Activated CD4-positive, alpha-beta T cell treated with anti-CD3 and anti-CD28 coated beads for 36 hours (primary cell): ENCODE measurements at regions of chr11 and their contacts with region 1.

Region 1: DNA sequence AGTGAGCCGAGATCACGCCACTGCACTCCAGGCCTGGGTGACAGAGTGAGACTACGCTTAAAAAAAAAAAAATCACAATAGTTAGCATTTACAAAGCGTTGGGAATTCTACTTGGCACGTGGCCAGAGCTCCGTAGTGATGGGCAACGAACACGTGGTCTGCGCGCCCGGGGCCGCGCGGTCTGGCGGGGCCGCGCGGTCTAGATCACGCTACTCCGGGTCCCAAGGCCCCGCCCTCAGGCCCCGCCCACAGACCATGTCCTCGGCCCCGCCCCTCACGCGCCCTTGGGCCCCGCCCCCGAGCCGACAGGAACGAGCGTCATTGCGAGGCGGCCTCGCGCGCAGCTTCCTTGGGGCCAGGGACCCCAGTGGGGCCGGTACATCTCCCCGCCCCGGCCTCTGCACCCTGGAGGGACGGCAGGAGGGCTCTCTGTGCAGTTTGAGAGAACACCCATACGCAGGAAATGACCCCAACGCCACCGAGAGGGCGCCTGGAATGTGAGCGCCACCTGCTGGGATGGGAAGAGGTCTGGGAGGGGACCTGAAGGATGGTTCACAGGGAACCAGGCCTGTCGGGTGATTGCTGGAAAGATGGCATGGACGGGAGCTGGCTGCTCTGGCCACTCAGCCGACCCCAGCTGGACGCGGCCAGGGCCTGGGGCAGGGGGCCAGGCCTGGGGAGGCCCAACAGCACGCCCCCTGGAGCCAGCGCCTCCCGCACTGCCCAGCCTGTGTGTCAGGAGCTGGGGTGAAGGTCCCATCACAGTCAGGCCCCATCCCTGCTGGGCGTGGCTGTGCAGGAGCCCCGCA is 2.0 kb upstream of the PTDSS2 start:
- DNase-seq: peak; percentile 99
- ATAC-seq: peak; percentile 79
- H3K4me3 Mint-ChIP-seq: peak overlapping the region; percentile 86
- H3K27ac Mint-ChIP-seq: peak overlapping the region; percentile 93
- H3K4me1 Mint-ChIP-seq: peaks cover 16% of the 10 kb centered on the region
- H3K27me3 Mint-ChIP-seq: peaks cover 3% of the 10 kb centered on the region

Region 2: DNA sequence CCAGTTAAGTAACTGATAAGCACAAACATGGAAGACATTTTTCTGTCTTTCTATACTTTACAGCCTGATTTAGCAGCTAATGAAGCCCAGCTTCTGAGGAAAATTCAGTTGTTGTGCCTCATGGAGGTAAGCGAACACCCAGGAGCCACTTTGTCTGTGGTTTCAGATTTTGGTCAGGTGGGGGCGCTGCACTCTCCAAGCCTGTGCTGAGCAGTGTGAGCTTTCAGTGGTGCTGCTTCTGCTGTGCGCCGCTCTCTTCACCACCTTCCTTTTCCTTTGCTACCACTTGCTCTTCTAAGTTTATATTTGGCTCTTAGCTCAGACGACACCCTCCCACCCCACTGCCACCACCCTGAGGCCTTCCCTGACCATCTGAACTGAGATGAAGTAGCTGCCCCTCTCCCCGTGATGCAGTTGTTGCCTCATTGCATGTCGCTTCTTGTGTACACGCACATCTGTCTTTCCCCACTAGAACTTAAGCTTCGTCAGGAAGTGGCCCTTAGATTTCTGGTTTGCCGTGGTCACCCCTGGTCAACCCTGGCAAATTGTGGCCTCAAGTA is 197.3 kb before region 1 on chr11:
- CTCF ChIA-PET with region 1: interaction called, 10 read pairs
- POLR2A ChIA-PET with region 1: no interaction called
- intact Hi-C with region 1: no loop called
- DNase-seq: peak; percentile 90
- ATAC-seq: peak; percentile 97
- H3K4me3 Mint-ChIP-seq: no peak overlapping the region
- H3K27ac Mint-ChIP-seq: peak overlapping the region; percentile 56
- H3K4me1 Mint-ChIP-seq: peaks cover 13% of the 10 kb centered on the region
- H3K27me3 Mint-ChIP-seq: no peaks in the 10 kb centered on the region

Region 3: DNA sequence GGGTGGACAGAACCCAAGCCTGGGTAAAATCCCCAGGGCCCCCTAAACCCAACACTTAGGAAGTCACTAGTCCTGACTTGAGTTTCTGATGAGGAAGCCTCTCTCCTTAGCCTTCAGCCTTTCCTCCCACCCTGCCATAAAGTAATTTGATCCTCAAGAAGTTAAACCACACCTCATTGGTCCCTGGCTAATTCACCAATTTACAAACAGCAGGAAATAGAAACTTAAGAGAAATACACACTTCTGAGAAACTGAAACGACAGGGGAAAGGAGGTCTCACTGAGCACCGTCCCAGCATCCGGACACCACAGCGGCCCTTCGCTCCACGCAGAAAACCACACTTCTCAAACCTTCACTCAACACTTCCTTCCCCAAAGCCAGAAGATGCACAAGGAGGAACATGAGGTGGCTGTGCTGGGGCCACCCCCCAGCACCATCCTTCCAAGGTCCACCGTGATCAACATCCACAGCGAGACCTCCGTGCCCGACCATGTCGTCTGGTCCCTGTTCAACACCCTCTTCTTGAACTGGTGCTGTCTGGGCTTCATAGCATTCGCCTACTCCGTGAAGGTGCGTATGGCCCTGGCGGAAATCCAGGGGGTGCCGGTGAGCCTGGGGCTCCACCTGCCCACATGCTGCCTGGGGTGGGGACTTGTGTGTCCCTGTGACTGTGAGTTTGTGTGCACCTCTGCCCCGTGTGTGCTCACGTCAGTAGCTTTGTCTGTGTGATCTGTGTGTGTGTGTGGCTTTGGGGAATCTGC is 134.2 kb before region 1 on chr11 and contains the start of gene IFITM1:
- CTCF ChIA-PET with region 1: interaction called, 9 read pairs
- POLR2A ChIA-PET with region 1: no interaction called
- intact Hi-C with region 1: loop called (anchors 2 to 5 kb)
- DNase-seq: peak; percentile 78
- ATAC-seq: peak; percentile 40
- H3K4me3 Mint-ChIP-seq: peak within 1 kb of the TSS; percentile 95
- H3K27ac Mint-ChIP-seq: peak within 1 kb of the TSS; percentile 99
- H3K4me1 Mint-ChIP-seq: peaks cover 29% of the 10 kb centered on the region
- H3K27me3 Mint-ChIP-seq: no peaks in the 10 kb centered on the region
- total RNA-seq, gene IFITM1: 248 to 285 TPM

Region 4: GRCh38 chr11:373716-374551 is 74.2 kb before region 1 on chr11:
- CTCF ChIA-PET with region 1: no interaction called
- POLR2A ChIA-PET with region 1: no interaction called
- intact Hi-C with region 1: no loop called
- DNase-seq: no peak
- ATAC-seq: no peak
- H3K4me3 Mint-ChIP-seq: no peak overlapping the region
- H3K27ac Mint-ChIP-seq: no peak overlapping the region
- H3K4me1 Mint-ChIP-seq: peaks cover 2% of the 10 kb centered on the region
- H3K27me3 Mint-ChIP-seq: peaks cover 5% of the 10 kb centered on the region

Region 5: GRCh38 chr11:416757-417621 is 31.1 kb before region 1 on chr11:
- CTCF ChIA-PET with region 1: interaction called, 4 read pairs
- POLR2A ChIA-PET with region 1: no interaction called
- intact Hi-C with region 1: loop called in 1 of 2 experiments (anchors 1 kb)
- DNase-seq: peak; percentile 60
- ATAC-seq: peak; percentile 20
- H3K4me3 Mint-ChIP-seq: peak overlapping the region; percentile 85
- H3K27ac Mint-ChIP-seq: no peak overlapping the region
- H3K4me1 Mint-ChIP-seq: peaks cover 32% of the 10 kb centered on the region
- H3K27me3 Mint-ChIP-seq: no peaks in the 10 kb centered on the region

Region 6: DNA sequence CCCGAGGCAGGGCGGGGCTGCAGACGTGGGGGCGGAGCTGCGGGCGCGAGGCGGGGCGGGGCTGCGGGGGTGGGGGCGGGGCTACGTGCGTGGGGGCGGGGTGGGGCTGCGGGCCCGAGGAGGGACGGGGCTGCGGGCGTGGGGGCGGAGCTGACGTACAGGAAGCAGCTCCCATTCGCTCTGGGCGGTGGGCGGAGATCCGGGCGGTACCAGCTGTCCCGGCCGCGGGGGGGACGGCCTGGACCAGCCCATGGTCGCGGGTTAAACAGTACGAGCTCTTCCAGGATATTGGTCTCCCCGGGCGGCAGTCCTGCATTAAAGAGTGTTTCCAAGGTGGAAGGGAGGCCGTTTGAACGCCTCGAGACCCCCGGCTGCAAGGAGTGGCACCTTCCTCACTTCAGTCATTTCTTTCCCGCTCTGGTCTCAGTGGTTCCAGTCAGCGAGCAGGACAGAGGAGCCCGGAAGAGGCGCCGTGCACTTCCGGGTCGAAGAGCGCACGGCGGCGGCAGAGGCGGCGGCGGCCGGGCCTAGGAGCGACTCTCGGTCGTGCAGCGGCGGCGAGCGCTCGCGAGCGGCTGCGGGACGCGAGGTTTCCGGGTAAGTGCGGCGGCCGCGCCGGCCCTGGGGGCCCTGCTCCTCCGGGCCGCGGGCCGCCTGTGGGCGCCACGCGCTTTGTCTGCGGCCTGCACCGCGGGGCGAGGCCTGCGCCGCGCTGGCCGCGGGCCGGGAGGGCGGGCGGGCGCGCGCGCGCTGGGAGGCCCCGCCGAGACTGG is 128.1 kb after region 1 on chr11 and contains the start of gene PHRF1:
- CTCF ChIA-PET with region 1: no interaction called
- POLR2A ChIA-PET with region 1: no interaction called
- intact Hi-C with region 1: loop called in 1 of 2 experiments (anchors 1 kb)
- DNase-seq: peak; percentile 98
- ATAC-seq: peak; percentile 89
- H3K4me3 Mint-ChIP-seq: peak within 1 kb of the TSS; percentile 86
- H3K27ac Mint-ChIP-seq: peak within 1 kb of the TSS; percentile 98
- H3K4me1 Mint-ChIP-seq: peaks cover 49% of the 10 kb centered on the region
- H3K27me3 Mint-ChIP-seq: peaks cover 10% of the 10 kb centered on the region
- total RNA-seq, gene PHRF1: 40.0 to 44.5 TPM

Region 7: DNA sequence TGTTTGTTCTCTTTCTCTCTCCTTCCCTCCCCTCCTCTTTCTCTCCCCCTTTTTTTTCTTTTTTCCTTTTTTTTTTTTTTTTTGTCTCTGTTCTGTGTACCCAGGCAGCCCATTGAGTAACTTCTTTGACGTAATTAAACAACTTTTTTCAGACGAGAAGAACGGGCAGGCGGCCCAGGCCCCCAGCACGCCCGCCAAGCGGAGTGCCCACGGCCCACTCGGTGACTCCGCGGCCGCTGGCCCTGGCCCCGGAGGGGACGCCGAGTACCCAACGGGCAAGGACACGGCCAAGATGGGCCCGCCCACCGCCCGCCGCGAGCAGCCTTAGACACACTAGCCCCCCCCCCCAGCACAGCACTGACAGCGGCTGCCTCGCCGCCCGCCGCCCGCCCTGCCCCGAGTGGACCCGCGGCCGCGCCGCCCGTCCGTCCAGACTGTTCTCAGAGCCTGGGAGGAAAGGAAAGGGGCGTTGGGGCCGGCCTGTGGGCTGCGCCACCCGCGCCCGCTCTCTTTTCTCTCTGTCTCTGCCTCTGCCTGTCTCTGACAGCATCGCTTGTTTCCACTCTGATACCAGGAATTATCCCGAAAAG is 1012.4 kb after region 1 on chr11:
- CTCF ChIA-PET with region 1: no interaction called
- POLR2A ChIA-PET with region 1: no interaction called
- intact Hi-C with region 1: no loop called
- DNase-seq: no peak
- ATAC-seq: no peak
- H3K4me3 Mint-ChIP-seq: no peak overlapping the region
- H3K27ac Mint-ChIP-seq: no peak overlapping the region
- H3K4me1 Mint-ChIP-seq: no peaks in the 10 kb centered on the region
- H3K27me3 Mint-ChIP-seq: no peaks in the 10 kb centered on the region